ENCODE measurements at regions of chr16 and their contacts with region 1.

Region 1: DNA sequence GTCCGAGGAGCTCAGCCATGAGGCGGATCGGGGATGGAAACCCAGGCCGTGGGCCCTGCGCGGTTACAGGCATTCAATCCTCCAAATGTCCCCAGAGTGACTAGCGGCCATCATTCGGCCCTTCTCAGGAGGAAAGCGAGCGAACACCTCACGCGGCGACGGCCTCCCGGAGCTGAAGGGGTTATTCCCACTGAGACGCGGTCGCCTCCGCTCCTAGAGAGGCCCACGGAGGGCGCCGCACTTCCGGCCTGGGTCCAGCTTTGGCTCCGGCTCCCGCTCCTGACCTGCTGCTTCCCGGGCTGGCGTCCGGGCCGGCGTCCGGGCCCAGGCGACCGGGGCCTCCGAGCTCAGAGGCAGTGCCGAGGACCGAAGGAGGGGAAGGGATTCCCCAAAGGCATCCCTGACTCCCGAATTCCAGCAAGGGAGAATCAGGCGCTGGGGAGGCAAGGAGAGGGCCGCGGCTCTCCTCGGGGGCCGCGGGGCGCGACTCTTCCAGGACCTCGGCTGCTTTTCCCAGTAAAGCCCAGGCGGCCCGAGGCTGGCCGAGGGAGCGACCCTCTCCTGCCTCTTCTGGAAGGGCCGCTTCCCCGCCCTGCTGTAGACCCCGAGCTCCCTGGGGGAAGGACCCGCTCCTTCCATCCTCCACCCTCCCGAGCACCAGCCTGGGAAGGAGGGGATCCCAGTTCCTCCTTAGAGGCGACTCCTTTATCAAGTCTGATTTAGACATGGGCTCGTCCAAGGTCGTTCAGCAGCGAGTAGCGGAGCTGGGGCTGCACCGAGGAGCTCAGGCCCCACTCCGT is 18.6 kb upstream of the ZNF629 start:
- DNase-seq: peak; percentile 89 to 95 (median 91)
- ATAC-seq: peak; percentile 93 to 98 (median 98)
- H3K4me3 ChIP-seq: peak overlapping the region; percentile 67 to 98 (median 78)
- H3K27ac ChIP-seq: peak overlapping the region; percentile 91 to 99 (median 95)
- H3K4me1 ChIP-seq: peaks cover 0 to 27% (median 15%) of the 10 kb centered on the region in 12 donors
- H3K27me3 ChIP-seq: no peaks in the 10 kb centered on the region
- CTCF ChIP-seq: peak in 4 of 12 donors; percentile 22 to 32 (median 24)
- POLR2A ChIP-seq: peak; percentile 76 to 92

Region 2: DNA sequence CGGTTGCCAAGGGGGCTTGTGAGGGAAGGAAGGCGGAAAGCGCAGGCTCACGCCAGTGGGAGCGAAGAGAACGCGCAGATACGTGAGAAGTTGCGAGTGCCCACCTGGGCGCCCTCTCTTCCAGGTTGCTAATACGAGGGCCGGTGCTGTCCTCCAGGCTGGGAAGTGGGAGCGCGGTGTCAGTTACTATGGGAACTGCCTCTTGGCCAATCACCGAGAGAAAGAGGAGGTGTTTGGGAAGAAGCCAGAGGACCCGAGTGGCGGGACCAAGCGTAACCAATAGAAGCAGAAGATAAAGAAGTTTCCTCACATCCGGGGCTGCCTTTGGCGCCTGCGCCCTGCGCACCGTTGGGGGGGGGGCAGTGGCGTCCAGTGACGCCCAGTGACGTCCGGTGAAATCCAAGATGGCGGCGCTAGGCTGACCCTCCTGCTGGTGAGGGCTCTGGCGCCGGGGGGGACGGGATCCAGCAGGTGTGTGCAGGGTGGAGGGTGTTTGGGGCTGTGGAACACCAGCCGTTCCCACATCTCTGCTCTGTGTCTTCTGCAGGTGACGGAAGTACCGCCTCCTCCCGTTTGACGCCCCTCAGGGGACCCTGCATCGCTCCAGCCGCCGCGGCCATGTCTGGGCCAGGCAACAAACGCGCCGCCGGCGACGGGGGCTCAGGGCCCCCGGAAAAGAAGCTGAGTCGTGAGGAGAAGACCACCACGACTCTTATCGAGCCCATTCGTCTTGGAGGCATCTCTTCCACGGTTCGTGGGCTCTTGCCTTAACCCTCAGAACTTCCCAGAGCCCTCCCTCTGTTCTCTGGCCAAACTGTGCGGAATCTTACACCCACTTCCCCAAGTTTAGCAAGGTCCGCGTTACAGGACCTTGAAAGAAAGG is 43.4 kb before region 1 on chr16 and contains the starts of genes CFAP119 and RNF40:
- intact Hi-C with region 1: loop called in 1 of 10 experiments (anchors 2 kb)
- DNase-seq: peak; percentile 96 to 97 (median 97)
- ATAC-seq: peak; percentile 93 to 98 (median 94)
- H3K4me3 ChIP-seq: peak within 1 kb of the TSS; percentile 70 to 99 (median 92)
- H3K27ac ChIP-seq: peak within 1 kb of the TSS; percentile 48 to 97 (median 90)
- H3K4me1 ChIP-seq: peaks cover 0 to 48% (median 34%) of the 10 kb centered on the region in 12 donors
- H3K27me3 ChIP-seq: no peaks in the 10 kb centered on the region
- CTCF ChIP-seq: no peak
- POLR2A ChIP-seq: peak; percentile 57 to 88
- total RNA-seq, gene CFAP119: 0.48 to 1.8 (median 0.95) TPM
- total RNA-seq, gene RNF40: 29.3 to 62.0 (median 50.3) TPM

Region 3: GRCh38 chr16:30775392-30776188 is 30.0 kb before region 1 on chr16:
- intact Hi-C with region 1: loop called in 2 of 10 experiments (anchors 5 kb)
- DNase-seq: peak; percentile 87 to 92 (median 89)
- ATAC-seq: peak; percentile 78 to 89 (median 86)
- H3K4me3 ChIP-seq: peak overlapping the region; percentile 61 to 93 (median 78)
- H3K27ac ChIP-seq: peak overlapping the region; percentile 67 to 99 (median 92)
- H3K4me1 ChIP-seq: peaks cover 0 to 41% (median 23%) of the 10 kb centered on the region in 12 donors
- H3K27me3 ChIP-seq: no peaks in the 10 kb centered on the region
- CTCF ChIP-seq: peak in 1 of 12 donors; percentile 6
- POLR2A ChIP-seq: peak in 1 of 2 donors; percentile 55

Region 4: DNA sequence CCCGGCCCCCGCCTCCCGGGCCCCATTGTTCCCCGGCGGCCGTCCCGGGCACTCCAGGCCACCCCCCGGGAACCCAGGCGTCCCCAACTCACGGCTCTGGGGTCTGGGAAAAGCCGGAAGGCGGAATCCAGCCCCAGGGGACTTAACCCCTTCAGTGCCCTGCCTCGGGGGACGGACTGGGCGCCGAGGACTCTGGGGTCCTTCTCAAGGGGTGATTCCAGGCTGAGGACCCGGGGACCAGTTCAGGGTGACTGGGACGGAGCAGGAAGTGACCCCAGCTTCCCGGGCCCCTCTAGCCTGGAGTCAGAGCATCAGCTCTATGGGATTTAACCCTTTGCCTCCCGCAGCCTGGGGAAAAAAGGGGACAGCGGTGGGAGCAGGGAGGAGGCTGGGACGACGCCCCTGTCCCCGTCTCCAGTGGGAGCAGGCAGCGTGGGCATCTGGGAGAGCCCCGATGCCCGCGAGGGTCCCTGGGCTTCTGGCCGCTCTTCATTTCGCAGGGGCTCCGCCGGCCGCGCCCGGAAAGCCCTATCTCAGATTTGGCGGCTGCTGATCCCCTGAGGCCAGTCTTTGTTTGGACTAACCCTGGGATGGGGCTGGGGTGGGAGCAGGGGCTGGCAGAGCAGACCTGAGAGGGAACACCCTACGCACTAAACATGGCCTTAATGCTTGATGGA is 18.5 kb before region 1 on chr16 and contains the start of gene ZNF629:
- intact Hi-C with region 1: loop called in 6 of 10 experiments (anchors 1 to 2 kb)
- DNase-seq: peak; percentile 77 to 86 (median 84)
- ATAC-seq: peak; percentile 80 to 90 (median 84)
- H3K4me3 ChIP-seq: peak within 1 kb of the TSS; percentile 68 to 100 (median 92)
- H3K27ac ChIP-seq: peak within 1 kb of the TSS; percentile 89 to 98 (median 94)
- H3K4me1 ChIP-seq: peaks cover 0 to 26% (median 19%) of the 10 kb centered on the region in 12 donors
- H3K27me3 ChIP-seq: no peaks in the 10 kb centered on the region
- CTCF ChIP-seq: no peak
- POLR2A ChIP-seq: peak in 1 of 2 donors; percentile 38
- total RNA-seq, gene ZNF629: 14.3 to 30.9 (median 22.7) TPM

Region 5: DNA sequence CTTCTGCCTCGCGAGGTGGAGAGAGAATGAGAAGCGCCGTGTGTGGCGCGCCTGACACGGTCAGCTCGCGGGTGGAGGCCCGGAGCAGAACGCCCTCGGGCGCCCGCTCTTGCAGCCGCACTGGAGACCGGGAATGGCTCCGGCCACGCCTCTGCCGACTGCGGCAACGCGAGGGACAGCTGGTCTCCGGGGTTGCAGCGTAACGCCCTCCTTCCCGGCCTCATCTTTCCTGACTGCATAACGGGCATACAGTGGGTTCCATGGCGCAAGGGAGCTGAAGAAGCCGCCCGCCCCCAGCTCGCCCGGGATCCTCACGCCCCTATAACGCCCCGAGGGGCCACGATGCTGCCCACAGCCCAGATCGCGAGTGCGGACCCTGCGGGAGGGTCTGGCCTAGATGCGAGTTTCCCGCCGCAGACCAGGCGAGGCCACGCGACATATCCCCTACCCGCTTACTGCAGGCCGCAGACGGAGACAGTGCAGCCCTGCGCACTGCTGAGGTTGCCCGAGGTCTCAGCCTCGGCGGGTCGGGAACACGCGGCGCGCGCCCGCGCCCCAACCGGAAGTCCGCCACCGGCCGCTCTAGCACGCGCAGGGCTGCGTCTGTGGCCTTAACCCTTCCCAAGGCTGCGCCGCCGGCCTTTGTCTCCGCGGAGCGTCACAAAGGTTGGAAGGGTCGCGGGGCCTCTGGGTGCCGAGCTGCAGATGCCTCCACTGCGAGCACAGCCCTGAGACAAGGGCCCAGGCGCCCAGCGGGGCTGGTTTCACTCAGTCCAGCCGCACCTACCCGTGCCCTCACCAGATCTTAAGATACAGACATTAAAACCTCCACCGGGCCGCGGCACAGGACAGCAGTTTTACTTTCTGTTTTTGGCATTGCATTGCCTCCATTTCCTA is 69.5 kb after region 1 on chr16:
- intact Hi-C with region 1: loop called in 3 of 10 experiments (anchors 5 to 10 kb)
- DNase-seq: peak; percentile 92 to 96 (median 95)
- ATAC-seq: peak; percentile 97 to 99 (median 98)
- H3K4me3 ChIP-seq: peak overlapping the region; percentile 52 to 99 (median 87)
- H3K27ac ChIP-seq: peak overlapping the region; percentile 80 to 100 (median 94)
- H3K4me1 ChIP-seq: peaks cover 3 to 29% (median 20%) of the 10 kb centered on the region in 12 donors
- H3K27me3 ChIP-seq: no peaks in the 10 kb centered on the region
- CTCF ChIP-seq: peak in 1 of 12 donors; percentile 12
- POLR2A ChIP-seq: peak in 1 of 2 donors; percentile 86

Measured in heart left ventricle (tissue), 16 donors.